ENCODE measurements at regions of chr16 and their contacts with region 1.

Region 1: DNA sequence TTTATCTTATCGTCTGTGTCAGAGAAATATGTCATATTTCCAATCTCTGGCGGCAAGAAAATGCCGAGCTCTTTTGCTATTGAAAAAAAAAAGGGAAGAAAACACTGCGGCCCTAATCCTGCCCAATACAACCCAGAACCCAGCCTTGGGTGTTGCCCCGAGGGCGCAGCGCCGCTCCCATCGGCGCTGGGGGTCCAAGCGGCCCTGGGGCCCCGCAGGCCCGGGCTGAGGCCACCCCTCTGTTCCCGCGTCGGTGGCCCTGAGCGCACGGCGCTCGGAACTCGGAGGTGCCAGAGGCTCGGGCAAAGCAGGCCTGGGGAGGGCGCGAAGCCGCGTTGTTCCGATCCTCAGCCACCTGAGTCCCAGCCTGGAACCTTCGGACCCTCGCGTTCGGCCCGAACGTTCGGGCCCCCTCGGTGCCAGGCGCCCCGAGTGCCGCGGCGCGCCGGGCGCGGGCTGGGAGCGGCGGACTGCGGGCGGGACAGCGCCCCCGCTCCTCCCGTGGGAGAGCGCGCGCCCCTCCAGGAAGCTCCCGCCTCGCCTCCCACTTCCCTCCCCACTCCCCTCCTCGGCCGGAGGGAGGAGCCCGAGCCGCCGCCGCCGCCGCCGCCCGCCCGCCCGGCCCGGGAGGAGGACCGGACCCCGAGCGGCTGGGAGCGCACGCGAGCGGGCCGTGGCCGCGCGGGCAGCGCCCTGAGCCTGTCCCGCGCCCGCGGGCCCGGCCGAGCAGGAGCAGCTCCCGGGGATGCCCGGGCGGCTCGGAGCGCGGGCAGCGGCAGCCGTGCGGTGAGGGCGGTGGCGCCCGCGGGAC is at the start of gene CPNE2:
- DNase-seq: peak; percentile 32
- ATAC-seq: peak; percentile 62
- H3K4me3 Mint-ChIP-seq: peak within 1 kb of the TSS; percentile 70
- H3K27ac Mint-ChIP-seq: peak within 1 kb of the TSS; percentile 18
- H3K4me1 Mint-ChIP-seq: peaks cover 12% of the 10 kb centered on the region
- H3K27me3 Mint-ChIP-seq: peaks cover 11% of the 10 kb centered on the region
- CTCF ChIP-seq: no peak
- total RNA-seq, gene CPNE2: 18.6 to 20.6 TPM

Region 2: DNA sequence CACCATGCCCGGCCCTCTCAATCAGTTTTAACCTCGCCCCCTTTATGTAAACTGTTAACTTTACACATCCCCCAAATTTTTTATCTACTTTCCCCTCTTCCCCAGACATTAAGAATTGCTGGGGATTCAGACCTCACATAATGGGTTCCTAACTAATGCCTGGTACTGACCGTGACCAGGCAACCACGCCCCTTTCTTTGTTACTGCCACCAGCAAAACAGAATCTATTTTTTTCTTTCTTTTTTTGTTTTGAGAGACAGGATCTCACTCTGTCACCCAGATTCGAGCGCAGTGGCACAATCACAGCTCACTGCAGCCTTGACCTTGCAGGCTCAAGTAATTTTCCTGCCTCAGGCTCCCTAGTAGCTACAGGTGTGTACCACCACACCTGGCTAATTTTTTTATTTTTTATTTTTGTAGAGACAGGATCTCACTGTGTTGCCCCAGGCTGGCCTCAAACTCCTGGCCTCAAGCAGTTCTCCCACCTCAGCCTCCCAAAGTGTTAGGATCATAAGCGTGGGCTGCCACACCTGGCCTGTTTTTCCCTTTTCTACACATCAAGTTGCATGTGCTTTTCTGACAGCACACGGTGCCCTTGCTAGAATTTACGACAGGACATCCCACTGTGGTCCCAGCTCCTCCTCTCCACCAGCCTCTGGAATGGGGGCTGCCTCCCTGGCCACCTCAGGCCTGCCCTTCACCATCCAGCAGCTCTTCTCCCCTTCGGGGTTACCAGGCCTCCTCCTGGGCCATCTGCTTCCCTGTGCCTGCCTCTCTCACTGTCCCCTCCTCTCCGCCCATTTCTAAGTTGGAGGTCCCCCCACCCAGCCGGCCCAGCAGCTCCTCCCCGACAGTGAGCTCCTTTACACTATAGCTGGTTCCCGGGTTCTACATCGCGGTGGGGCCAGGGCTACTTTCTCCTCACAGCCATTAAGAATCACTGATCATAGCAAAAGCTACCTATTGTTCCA is 11.0 kb after region 1 on chr16:
- CTCF ChIA-PET with region 1: interaction called, 114 read pairs
- POLR2A ChIA-PET with region 1: interaction called, 5 read pairs
- intact Hi-C with region 1: no loop called
- DNase-seq: no peak
- ATAC-seq: no peak
- H3K4me3 Mint-ChIP-seq: no peak overlapping the region
- H3K27ac Mint-ChIP-seq: no peak overlapping the region
- H3K4me1 Mint-ChIP-seq: peaks cover 22% of the 10 kb centered on the region
- H3K27me3 Mint-ChIP-seq: no peaks in the 10 kb centered on the region
- CTCF ChIP-seq: no peak

Region 3: GRCh38 chr16:57152096-57153093 is 60.2 kb after region 1 on chr16:
- CTCF ChIA-PET with region 1: interaction called, 13 read pairs
- POLR2A ChIA-PET with region 1: interaction called, 5 read pairs
- intact Hi-C with region 1: no loop called
- DNase-seq: peak; percentile 25
- ATAC-seq: peak; percentile 78
- H3K4me3 Mint-ChIP-seq: no peak overlapping the region
- H3K27ac Mint-ChIP-seq: peak overlapping the region; percentile 19
- H3K4me1 Mint-ChIP-seq: peaks cover 21% of the 10 kb centered on the region
- H3K27me3 Mint-ChIP-seq: no peaks in the 10 kb centered on the region
- CTCF ChIP-seq: no peak

Region 4: GRCh38 chr16:57167953-57168352 is 75.8 kb after region 1 on chr16:
- CTCF ChIA-PET with region 1: interaction called, 92 read pairs
- POLR2A ChIA-PET with region 1: interaction called, 5 read pairs
- intact Hi-C with region 1: no loop called
- DNase-seq: peak; percentile 16
- ATAC-seq: peak; percentile 86
- H3K4me3 Mint-ChIP-seq: no peak overlapping the region
- H3K27ac Mint-ChIP-seq: no peak overlapping the region
- H3K4me1 Mint-ChIP-seq: peaks cover 4% of the 10 kb centered on the region
- H3K27me3 Mint-ChIP-seq: no peaks in the 10 kb centered on the region
- CTCF ChIP-seq: peak; percentile 82